ENCODE measurements at regions of chr17 and their contacts with region 1.

Region 1: DNA sequence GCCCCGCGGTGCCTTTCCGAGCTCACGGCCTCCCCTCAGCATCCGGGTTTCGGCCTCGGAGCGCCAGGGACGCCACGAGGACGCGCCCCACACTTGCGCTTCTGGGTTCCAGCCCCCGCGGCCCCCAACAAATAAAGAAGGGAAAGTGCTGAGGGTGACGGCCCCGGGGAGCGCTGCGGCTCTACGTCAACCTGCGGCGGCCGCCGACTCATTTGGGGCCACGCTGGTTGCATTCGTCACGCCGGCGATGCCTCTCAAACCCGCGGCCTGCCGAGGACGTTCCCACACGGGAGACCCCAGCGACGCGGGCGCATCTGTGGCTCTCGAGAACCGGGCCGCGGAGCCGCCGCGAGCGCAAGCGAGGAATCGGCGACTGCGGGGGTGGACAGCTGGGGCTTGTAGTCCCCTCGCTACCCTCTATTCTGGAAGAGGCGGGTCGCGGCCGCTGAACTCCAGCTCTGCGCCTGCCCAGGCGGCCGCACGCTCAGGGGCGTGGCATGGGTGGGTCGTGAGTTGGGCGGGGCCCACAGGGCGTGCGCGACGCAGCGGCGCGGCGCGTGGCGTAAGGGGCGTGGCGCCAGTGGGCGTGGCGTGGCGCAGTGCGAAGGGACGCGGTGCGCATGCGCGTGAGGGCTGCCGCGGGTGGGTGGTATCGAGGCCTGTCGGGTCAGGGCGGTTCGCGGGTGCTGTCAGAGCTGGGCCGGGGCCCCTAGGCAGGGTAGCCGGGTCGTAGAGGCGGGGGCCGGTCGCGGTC is at the start of gene AMZ2:
- DNase-seq: peak; percentile 95
- ATAC-seq: peak; percentile 88
- H3K4me3 Mint-ChIP-seq: peak within 1 kb of the TSS; percentile 87
- H3K27ac Mint-ChIP-seq: peak within 1 kb of the TSS; percentile 98
- H3K4me1 Mint-ChIP-seq: peaks cover 42% of the 10 kb centered on the region
- H3K27me3 Mint-ChIP-seq: no peaks in the 10 kb centered on the region
- CTCF ChIP-seq: no peak
- total RNA-seq, gene AMZ2: 132 to 141 TPM

Region 2: DNA sequence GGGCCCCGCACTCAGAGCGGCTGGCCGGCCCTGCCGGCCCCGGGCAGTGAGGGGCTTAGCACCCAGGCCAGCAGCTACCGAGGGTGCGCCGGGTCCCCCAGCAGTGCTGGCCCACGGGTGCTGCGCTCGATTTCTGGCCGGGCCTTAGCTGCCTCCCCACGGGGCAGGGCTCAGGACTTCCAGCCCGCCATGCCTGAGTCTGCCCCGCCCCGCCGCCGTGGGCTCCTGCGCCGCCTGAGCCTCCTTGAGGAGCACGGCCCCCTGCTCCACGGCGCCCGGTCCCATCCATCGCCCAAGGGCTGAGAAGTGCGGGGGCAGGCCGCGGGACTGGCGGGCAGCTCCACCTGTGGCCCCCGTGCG is 67.7 kb before region 1 on chr17:
- CTCF ChIA-PET with region 1: interaction called, 13 read pairs
- POLR2A ChIA-PET with region 1: interaction called, 5 read pairs
- intact Hi-C with region 1: loop called (anchors 5 kb)
- DNase-seq: no peak
- ATAC-seq: no peak
- H3K4me3 Mint-ChIP-seq: no peak overlapping the region
- H3K27ac Mint-ChIP-seq: no peak overlapping the region
- H3K4me1 Mint-ChIP-seq: peaks cover 46% of the 10 kb centered on the region
- H3K27me3 Mint-ChIP-seq: no peaks in the 10 kb centered on the region
- CTCF ChIP-seq: no peak

Region 3: DNA sequence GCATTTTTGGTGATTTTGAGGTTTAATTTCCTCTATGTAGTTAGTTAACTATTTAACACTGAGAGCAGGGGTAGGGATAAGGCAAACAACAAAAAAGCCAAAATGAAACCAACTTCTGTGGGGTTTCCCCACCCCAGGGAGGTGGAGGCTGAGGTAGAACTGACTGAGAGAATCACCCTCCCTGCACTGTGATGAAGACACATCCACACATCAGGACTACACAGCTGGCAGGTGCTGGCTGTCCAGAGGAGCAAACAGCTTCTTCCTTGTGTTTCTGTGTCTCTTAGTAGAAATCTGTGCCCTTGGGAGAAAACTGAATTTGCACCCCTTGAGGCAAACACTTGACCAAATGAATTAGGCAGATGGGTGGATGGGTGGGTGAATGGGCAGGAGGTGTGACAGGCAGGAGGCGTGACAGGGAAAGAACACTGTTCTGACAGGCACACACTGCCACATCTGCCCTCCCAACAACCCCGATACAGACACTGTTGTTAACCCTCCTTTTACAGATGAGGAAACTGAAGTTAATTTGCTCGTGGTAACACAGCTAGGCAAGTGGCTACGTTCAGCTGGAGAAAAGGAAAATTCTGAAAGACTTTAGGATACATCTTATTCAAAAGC is 62.7 kb before region 1 on chr17:
- CTCF ChIA-PET with region 1: interaction called, 13 read pairs
- POLR2A ChIA-PET with region 1: interaction called, 5 read pairs
- intact Hi-C with region 1: loop called (anchors 5 kb)
- DNase-seq: peak; percentile 79
- ATAC-seq: peak; percentile 81
- H3K4me3 Mint-ChIP-seq: peak overlapping the region; percentile 53
- H3K27ac Mint-ChIP-seq: peak overlapping the region; percentile 83
- H3K4me1 Mint-ChIP-seq: peaks cover 61% of the 10 kb centered on the region
- H3K27me3 Mint-ChIP-seq: no peaks in the 10 kb centered on the region
- CTCF ChIP-seq: no peak

Region 4: DNA sequence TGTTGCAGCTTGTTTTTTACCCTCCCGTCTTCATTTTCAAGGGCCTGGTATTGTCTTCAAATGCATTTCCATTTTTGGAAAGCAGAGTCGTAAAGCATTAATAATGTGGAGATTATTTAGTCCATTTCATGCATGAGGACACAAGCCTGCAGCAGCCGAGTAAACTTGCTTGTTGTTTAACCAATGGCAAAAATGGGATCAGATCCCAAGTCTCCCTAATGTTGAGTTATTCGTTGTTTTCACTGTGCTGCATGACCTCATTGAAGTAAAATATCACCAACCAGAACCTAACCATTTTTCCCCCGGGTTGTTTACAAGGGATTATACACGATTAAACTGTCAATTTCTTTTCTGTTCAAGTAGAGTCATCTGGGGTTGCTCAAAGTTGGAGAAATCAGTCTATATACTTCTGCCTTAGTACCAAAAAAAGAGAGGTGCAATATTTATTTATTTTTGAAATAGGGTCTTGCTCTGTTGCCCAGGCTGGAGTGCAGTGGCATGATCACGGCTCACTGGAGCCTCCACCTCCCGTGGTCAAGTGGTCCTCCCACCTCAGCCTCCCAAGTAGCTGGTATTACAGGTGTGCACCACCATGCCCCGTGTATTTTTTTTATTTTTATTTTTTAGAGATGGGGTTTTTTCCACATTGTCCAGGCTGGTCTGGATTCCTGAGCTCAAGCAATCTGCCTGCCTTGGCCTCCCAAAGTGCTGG is 12.6 kb after region 1 on chr17:
- CTCF ChIA-PET with region 1: interaction called, 8 read pairs
- POLR2A ChIA-PET with region 1: interaction called, 31 read pairs
- intact Hi-C with region 1: no loop called
- DNase-seq: no peak
- ATAC-seq: no peak
- H3K4me3 Mint-ChIP-seq: peak overlapping the region; percentile 69
- H3K27ac Mint-ChIP-seq: peak overlapping the region; percentile 93
- H3K4me1 Mint-ChIP-seq: peaks cover 63% of the 10 kb centered on the region
- H3K27me3 Mint-ChIP-seq: no peaks in the 10 kb centered on the region
- CTCF ChIP-seq: no peak

Region 5: GRCh38 chr17:68277807-68278206 is 30.2 kb after region 1 on chr17:
- CTCF ChIA-PET with region 1: no interaction called
- POLR2A ChIA-PET with region 1: no interaction called
- intact Hi-C with region 1: no loop called
- DNase-seq: no peak
- ATAC-seq: no peak
- H3K4me3 Mint-ChIP-seq: no peak overlapping the region
- H3K27ac Mint-ChIP-seq: no peak overlapping the region
- H3K4me1 Mint-ChIP-seq: peaks cover 4% of the 10 kb centered on the region
- H3K27me3 Mint-ChIP-seq: no peaks in the 10 kb centered on the region
- CTCF ChIP-seq: no peak

Region 6: DNA sequence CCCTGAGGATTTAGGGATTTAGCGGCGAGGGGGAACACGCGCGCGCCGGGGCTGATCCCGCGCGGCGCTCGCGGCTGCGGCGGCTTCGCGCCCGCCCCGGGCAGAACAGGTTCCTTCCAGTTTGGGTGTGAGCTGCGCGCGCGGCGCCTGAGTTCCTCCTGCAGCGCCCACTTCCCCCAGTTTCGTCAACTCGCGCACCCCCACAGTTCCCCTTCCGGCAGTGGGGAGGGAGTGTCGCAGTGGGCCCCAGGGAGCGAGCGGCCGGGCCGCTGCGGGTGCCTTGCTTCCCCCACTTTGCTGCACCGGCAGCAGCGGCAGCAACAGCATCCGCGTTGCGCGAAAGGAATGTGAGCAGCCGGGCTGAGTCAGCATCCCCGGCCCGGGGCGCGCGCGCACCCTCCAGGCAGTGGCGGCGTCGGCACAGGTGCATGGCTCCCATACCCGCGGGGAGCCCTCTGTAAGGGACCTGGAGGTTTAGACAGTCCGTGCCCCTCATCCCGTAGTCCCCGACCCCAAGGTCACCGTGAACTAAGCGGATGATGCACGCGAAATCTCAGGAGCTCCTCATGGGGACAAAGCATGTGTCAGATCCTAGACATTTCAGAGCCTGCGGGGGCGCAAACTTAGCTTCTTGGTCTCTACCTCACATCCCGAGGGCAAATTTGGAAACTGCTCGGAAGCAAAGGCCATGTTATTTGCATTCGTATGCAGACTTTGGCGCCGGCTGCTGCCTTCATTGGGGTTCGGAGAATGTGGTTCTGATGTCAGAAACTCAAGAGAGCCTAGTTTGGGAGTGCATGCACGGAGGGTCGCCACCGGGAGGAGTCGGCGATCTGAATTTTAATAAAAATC is 44.4 kb after region 1 on chr17:
- CTCF ChIA-PET with region 1: interaction called, 5 read pairs
- POLR2A ChIA-PET with region 1: interaction called, 27 read pairs
- intact Hi-C with region 1: no loop called
- DNase-seq: peak; percentile 93
- ATAC-seq: peak; percentile 69
- H3K4me3 Mint-ChIP-seq: peak overlapping the region; percentile 94
- H3K27ac Mint-ChIP-seq: peak overlapping the region; percentile 93
- H3K4me1 Mint-ChIP-seq: peaks cover 65% of the 10 kb centered on the region
- H3K27me3 Mint-ChIP-seq: no peaks in the 10 kb centered on the region
- CTCF ChIP-seq: no peak

Measured in activated CD8-positive, alpha-beta T cell treated with anti-CD3 and anti-CD28 coated beads for 36 hours (primary cell).